SK-N-SH (cell line): ENCODE measurements at regions of chr2 and their contacts with region 1.

Region 1: GRCh38 chr2:54704688-54705605 is 18.5 kb upstream of the EML6 start:
- DNase-seq: peak; percentile 61
- H3K4me3 ChIP-seq: no peak overlapping the region; a peak in 1 of 4 replicates
- H3K27ac ChIP-seq: no peak overlapping the region; a peak in 1 of 4 replicates
- H3K4me1 ChIP-seq: no peaks in the 10 kb centered on the region; a peak in 1 of 4 replicates
- H3K27me3 ChIP-seq: no peaks in the 10 kb centered on the region
- CTCF ChIP-seq: peak; percentile 79
- EP300 ChIP-seq: no peak
- RAD21 ChIP-seq: peak; percentile 89

Region 2: DNA sequence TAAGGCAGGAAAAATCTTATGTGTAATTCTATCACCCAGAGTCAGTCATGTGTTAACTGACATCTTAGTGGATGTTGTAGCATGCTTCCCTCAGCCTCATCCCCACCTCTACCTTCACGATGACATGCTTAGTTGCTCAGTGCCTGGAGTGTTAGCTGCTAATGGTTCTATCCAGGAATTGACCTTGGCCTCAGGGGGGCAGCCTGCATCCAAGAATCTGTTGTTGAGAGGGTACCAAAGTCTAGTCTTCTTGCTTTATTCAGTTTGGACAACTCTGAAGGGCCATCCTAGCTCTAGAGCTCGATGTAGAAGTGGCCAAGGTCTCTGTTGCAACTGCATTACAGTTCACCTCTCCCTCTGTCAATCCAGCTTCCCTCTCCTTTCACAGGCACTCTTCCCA is 528.4 kb before region 1 on chr2:
- CTCF ChIA-PET with region 1: interaction called, 22 read pairs
- POLR2A ChIA-PET with region 1: no interaction called
- DNase-seq: peak; percentile 38
- H3K4me3 ChIP-seq: no peak overlapping the region
- H3K27ac ChIP-seq: no peak overlapping the region
- H3K4me1 ChIP-seq: no peaks in the 10 kb centered on the region
- H3K27me3 ChIP-seq: no peaks in the 10 kb centered on the region
- CTCF ChIP-seq: peak; percentile 63
- EP300 ChIP-seq: no peak
- RAD21 ChIP-seq: peak; percentile 80

Region 3: DNA sequence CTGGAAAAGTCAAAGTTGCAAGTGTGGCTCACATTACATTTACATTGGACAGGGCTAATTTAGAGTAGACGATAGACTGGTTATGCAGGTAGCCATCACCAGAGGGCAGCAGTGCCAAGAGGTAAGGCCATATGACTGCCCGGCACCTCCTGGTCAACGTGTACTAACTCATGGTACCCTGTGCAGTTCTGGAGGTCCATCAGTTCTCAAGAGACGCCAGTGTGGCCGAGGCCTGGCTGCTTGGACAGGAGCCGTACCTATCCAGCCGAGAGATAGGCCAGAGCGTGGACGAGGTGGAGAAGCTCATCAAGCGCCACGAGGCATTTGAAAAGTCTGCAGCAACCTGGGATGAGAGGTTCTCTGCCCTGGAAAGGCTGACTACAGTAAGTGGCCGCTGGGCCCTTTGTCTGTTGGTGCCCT is 47.3 kb before region 1 on chr2:
- CTCF ChIA-PET with region 1: interaction called, 28 read pairs
- POLR2A ChIA-PET with region 1: no interaction called
- DNase-seq: peak; percentile 67
- H3K4me3 ChIP-seq: no peak overlapping the region; a peak in 1 of 4 replicates
- H3K27ac ChIP-seq: no peak overlapping the region
- H3K4me1 ChIP-seq: peaks cover 0 to 5% of the 10 kb centered on the region in 2 experiments; a peak in 2 of 4 replicates
- H3K27me3 ChIP-seq: no peaks in the 10 kb centered on the region
- CTCF ChIP-seq: peak; percentile 56
- EP300 ChIP-seq: no peak
- RAD21 ChIP-seq: peak; percentile 68

Region 4: GRCh38 chr2:54691445-54692135 is 13.4 kb before region 1 on chr2:
- CTCF ChIA-PET with region 1: interaction called, 15 read pairs
- POLR2A ChIA-PET with region 1: no interaction called
- DNase-seq: no peak
- H3K4me3 ChIP-seq: no peak overlapping the region
- H3K27ac ChIP-seq: no peak overlapping the region
- H3K4me1 ChIP-seq: no peaks in the 10 kb centered on the region
- H3K27me3 ChIP-seq: no peaks in the 10 kb centered on the region
- CTCF ChIP-seq: no peak
- EP300 ChIP-seq: no peak
- RAD21 ChIP-seq: no peak

Region 5: DNA sequence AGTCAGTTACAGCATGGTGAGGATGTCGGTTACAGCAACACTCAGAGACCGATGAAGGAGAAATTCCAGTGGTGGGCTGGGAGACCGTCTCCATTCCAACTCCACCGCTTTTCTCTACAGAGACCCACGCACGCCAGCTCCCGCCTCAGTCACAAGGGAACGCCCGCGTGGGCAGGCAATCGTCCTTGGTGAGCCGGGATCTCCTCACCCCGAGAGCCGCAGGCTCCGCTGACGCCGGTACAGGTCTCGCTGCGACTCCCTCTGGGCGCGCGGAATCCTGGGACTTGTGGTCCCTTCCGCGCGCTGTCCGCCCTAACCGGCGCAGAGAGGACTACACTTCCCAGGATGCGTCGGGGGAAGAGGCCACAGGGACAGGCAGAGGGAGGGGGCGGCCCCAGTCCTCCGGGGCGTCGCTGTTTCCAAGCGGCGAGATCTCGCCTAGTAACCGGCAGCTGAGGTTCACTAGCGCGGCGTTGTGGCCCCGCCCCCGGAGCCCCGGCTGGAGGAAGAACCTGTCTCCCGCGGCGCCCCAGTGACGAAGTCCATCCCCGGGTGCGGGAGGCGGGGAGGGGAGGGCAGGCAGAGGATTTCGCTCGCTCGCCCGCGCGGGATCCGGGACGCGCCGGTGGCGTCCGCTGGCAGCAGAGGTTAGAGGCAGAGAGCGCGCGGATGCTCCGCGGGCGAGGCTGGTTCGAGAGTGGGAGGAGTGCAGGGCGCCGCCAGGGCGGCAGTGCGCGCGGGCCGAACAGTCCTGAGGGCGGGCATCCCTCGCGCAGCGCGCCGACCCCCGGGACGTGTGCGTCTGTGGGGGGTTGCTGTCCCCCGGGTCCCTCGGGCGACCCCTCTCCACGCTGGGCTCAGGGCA is 18.4 kb after region 1 on chr2 and contains the start of gene EML6:
- CTCF ChIA-PET with region 1: interaction called, 11 read pairs
- POLR2A ChIA-PET with region 1: no interaction called
- DNase-seq: peak; percentile 98
- H3K4me3 ChIP-seq: peak within 1 kb of the TSS; percentile 82 to 86
- H3K27ac ChIP-seq: peak within 1 kb of the TSS; percentile 48 to 89; a peak in 3 of 4 replicates
- H3K4me1 ChIP-seq: peaks cover 0 to 10% of the 10 kb centered on the region in 2 experiments; a peak in 2 of 4 replicates
- H3K27me3 ChIP-seq: no peaks in the 10 kb centered on the region; the same call in 1 of the 2 replicates
- CTCF ChIP-seq: peak; percentile 42
- EP300 ChIP-seq: no peak; a peak in 2 of 4 replicates
- RAD21 ChIP-seq: no peak
- polyA plus RNA-seq, gene EML6: 1.1 and 1.6 TPM in 2 replicates